ENCODE measurements at regions of chr3 and their contacts with region 1.

Region 1: GRCh38 chr3:142595951-142596725 is at the start of gene PLS1:
- DNase-seq: peak; percentile 75 to 87
- ATAC-seq: peak; percentile 92 to 97 (median 96)
- H3K4me3 ChIP-seq: peak within 1 kb of the TSS; percentile 52 to 82 (median 74)
- H3K27ac ChIP-seq: peak within 1 kb of the TSS in 9 of 10 donors; percentile 54 to 68 (median 63)
- H3K4me1 ChIP-seq: peaks cover 0 to 17% (median 4%) of the 10 kb centered on the region in 9 donors
- H3K27me3 ChIP-seq: no peaks in the 10 kb centered on the region
- CTCF ChIP-seq: peak in 1 of 9 donors; percentile 7
- total RNA-seq, gene PLS1: 1.0 to 2.7 (median 1.8) TPM

Region 2: GRCh38 chr3:142459929-142460328 is 136.2 kb before region 1 on chr3:
- intact Hi-C with region 1: no loop called
- DNase-seq: no peak
- ATAC-seq: no peak
- H3K4me3 ChIP-seq: no peak overlapping the region
- H3K27ac ChIP-seq: no peak overlapping the region
- H3K4me1 ChIP-seq: no peaks in the 10 kb centered on the region
- H3K27me3 ChIP-seq: no peaks in the 10 kb centered on the region
- CTCF ChIP-seq: no peak

Region 3: DNA sequence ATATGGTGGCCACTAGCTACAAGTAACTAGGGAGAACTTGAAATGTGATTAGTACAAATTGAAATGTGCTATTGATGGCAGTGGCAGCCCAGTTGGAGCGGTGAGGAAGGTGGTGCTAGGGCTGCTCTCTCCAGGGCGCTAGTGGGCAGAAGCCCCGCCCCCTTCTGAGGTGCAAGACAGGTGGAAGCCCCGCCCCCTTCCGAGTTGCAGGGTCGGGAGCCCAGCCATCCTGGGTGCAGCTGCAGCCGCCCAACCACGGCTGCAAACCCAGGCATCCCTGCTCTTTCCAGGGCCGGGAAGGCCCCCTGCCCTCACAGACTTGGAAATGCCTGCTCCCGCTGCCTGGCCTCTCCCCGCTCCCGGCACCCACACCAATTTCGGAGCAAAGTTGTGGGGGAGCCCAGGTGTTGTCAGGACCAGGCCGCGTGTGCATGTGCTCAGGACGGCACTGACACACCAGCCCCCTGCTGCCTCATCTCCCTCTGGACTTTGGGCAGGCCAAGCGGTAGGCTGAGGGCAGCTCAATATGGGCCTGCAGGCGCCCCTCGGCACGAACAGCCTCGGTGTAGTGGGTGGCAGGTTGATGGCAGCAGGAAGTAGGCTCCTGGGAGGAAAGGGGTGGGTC is 27.6 kb before region 1 on chr3:
- intact Hi-C with region 1: no loop called
- DNase-seq: no peak
- ATAC-seq: peak in 1 of 8 donors; percentile 47
- H3K4me3 ChIP-seq: no peak overlapping the region
- H3K27ac ChIP-seq: no peak overlapping the region
- H3K4me1 ChIP-seq: peaks cover 0 to under 1% (median 0%) of the 10 kb centered on the region in 9 donors
- H3K27me3 ChIP-seq: no peaks in the 10 kb centered on the region
- CTCF ChIP-seq: no peak

Region 4: GRCh38 chr3:142808103-142808917 is 212.2 kb after region 1 on chr3:
- intact Hi-C with region 1: loop called in 2 of 10 experiments (anchors 10 kb)
- DNase-seq: no peak
- ATAC-seq: no peak
- H3K4me3 ChIP-seq: no peak overlapping the region
- H3K27ac ChIP-seq: no peak overlapping the region
- H3K4me1 ChIP-seq: peaks cover 0 to 3% (median 0%) of the 10 kb centered on the region in 9 donors
- H3K27me3 ChIP-seq: no peaks in the 10 kb centered on the region
- CTCF ChIP-seq: no peak

Region 5: DNA sequence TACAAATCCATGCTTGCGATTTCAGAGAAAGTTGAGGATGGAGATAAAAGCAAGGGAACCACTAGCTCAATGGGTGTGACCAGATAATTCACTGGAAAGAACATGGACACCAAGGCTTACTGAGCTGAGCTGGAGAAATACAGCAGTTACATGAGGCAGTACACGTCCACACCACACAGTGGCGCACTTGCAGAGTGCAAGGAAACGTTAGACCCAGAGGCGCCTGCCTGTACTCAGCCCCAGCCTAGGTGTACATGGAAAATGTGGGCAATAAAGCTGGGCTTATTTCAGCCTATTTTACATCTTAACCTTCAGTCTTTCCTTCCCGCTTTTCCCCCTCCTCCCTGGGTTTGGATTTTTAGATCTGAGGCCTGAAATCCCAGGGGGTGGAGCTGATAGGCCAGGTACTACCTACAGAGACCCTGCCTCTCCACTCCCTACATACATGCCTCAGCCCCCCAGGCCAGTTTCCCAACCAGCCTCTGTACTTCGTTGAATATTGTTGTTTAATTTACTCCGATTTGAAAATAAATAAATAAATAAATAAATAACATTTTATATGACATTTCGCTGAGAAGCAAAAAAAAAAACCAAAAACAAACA is 232.7 kb after region 1 on chr3:
- intact Hi-C with region 1: loop called in 2 of 10 experiments (anchors 10 kb)
- DNase-seq: peak; percentile 71 to 80
- ATAC-seq: peak; percentile 87 to 95 (median 92)
- H3K4me3 ChIP-seq: no peak overlapping the region
- H3K27ac ChIP-seq: no peak overlapping the region
- H3K4me1 ChIP-seq: no peaks in the 10 kb centered on the region
- H3K27me3 ChIP-seq: no peaks in the 10 kb centered on the region
- CTCF ChIP-seq: peak; percentile 63 to 89 (median 82)

Region 6: GRCh38 chr3:142993958-142994442 is 397.9 kb after region 1 on chr3:
- intact Hi-C with region 1: loop called in 2 of 10 experiments (anchors 5 to 10 kb)
- DNase-seq: peak; percentile 38 to 44
- ATAC-seq: peak in 4 of 8 donors; percentile 34 to 62 (median 52)
- H3K4me3 ChIP-seq: no peak overlapping the region
- H3K27ac ChIP-seq: no peak overlapping the region
- H3K4me1 ChIP-seq: peaks cover 0 to 16% (median 0%) of the 10 kb centered on the region in 9 donors
- H3K27me3 ChIP-seq: no peaks in the 10 kb centered on the region
- CTCF ChIP-seq: peak; percentile 48 to 79 (median 71)